ENCODE measurements at regions of chr3 and their contacts with region 1.

Region 1: DNA sequence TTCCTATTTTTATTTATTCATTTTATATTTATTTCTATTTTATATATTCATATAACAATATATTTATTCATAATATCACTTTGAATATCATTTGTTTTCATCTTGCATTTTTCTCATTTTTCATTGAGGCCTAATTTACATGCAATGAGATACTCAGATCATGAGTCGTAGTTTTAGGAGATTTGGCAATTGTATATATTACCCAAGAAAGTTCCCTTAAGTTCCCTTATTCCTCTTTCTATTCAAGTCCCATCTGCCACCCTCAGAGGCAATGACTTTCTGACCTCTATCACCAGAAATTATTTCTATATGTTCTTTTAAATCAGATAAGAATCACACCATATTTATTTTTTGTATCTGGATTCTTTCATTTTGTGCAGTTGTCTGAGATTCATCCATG is 329.1 kb upstream of the TPRG1 start:
- DNase-seq: peak; percentile 75 to 93 (median 84)
- H3K4me3 ChIP-seq: peak overlapping the region in 1 of 3 experiments; percentile 21
- H3K4me3 Mint-ChIP-seq: peak overlapping the region in 1 of 2 donors; percentile 46
- H3K27ac ChIP-seq: peak overlapping the region; percentile 52 to 80
- H3K27ac Mint-ChIP-seq: peak overlapping the region; percentile 85 to 98 (median 94)
- H3K4me1 ChIP-seq: peaks cover 42 to 59% of the 10 kb centered on the region in 2 donors
- H3K4me1 Mint-ChIP-seq: peaks cover 50% of the 10 kb centered on the region
- H3K27me3 ChIP-seq: no peaks in the 10 kb centered on the region
- H3K27me3 Mint-ChIP-seq: peaks cover 0 to 1% (median 0%) of the 10 kb centered on the region in 3 donors
- CTCF ChIP-seq: no peak

Region 2: DNA sequence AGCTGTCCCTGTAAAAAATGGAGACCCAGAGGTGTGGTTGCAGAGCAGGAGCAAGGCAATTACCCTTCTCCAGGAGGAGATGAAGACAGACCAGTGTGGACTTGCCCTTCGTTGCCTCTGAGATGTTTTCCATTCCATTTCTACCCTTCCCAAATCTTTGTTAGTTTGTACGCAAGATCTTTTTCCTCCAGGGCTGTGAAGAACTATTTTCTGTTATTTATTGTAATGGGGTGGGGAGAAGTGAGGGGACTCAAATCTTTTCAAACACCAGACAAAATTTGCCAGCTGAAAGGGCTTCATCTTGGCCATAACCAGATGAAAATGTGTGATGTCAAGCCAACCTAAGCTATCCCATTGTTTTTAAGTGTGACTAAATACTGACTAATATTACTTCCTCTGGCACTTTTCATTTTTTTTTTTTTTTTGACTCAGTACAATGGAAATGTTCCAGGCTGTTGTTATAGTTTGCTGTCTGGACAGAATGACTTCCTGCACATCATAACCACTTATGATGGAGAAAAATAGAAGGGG is 57.8 kb after region 1 on chr3:
- intact Hi-C with region 1: loop called in 1 of 2 experiments (anchors 10 kb)
- DNase-seq: peak; percentile 33 to 68 (median 62)
- H3K4me3 ChIP-seq: no peak overlapping the region
- H3K4me3 Mint-ChIP-seq: no peak overlapping the region
- H3K27ac ChIP-seq: peak overlapping the region in 1 of 2 donors; percentile 56
- H3K27ac Mint-ChIP-seq: peak overlapping the region in 6 of 7 donors; percentile 0 to 84 (median 41)
- H3K4me1 ChIP-seq: peaks cover 33 to 37% of the 10 kb centered on the region in 2 donors
- H3K4me1 Mint-ChIP-seq: peaks cover 43% of the 10 kb centered on the region
- H3K27me3 ChIP-seq: no peaks in the 10 kb centered on the region
- H3K27me3 Mint-ChIP-seq: peaks cover 0 to 4% (median 0%) of the 10 kb centered on the region in 3 donors
- CTCF ChIP-seq: no peak

Region 3: GRCh38 chr3:188914552-188914951 is 71.9 kb after region 1 on chr3:
- intact Hi-C with region 1: loop called (anchors 10 kb)
- DNase-seq: peak; percentile 81 to 88 (median 86)
- H3K4me3 ChIP-seq: no peak overlapping the region
- H3K4me3 Mint-ChIP-seq: peak overlapping the region in 1 of 2 donors; percentile 63
- H3K27ac ChIP-seq: peak overlapping the region in 1 of 2 donors; percentile 80
- H3K27ac Mint-ChIP-seq: peak overlapping the region; percentile 76 to 97 (median 89)
- H3K4me1 ChIP-seq: peaks cover 52% of the 10 kb centered on the region in 2 donors
- H3K4me1 Mint-ChIP-seq: peaks cover 55% of the 10 kb centered on the region
- H3K27me3 ChIP-seq: no peaks in the 10 kb centered on the region
- H3K27me3 Mint-ChIP-seq: peaks cover 0 to 2% (median 0%) of the 10 kb centered on the region in 3 donors
- CTCF ChIP-seq: no peak

Region 4: DNA sequence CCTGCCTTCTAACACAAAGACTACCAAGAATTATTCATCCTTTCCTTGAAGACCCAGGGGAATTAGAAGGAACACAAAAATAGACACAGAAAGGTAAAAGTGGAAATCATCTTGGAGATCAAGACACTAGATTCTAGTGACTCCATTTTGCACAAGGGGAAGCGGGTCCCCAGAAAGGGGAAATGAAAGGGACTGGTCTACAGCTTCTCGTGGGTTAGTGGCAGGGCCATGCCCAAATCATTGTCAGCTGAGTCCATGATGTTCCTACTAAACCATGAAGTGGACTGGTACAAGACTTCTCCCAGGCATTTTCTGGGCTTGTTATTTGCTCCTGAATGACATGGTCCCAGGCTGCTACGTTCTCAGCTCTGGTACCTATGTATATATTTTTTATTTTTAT is 98.5 kb after region 1 on chr3:
- intact Hi-C with region 1: loop called in 1 of 2 experiments (anchors 5 kb)
- DNase-seq: peak; percentile 85 to 93 (median 91)
- H3K4me3 ChIP-seq: peak overlapping the region in 1 of 3 experiments; percentile 62
- H3K4me3 Mint-ChIP-seq: peak overlapping the region in 1 of 2 donors; percentile 71
- H3K27ac ChIP-seq: peak overlapping the region; percentile 84 to 97
- H3K27ac Mint-ChIP-seq: peak overlapping the region; percentile 94 to 98 (median 97)
- H3K4me1 ChIP-seq: peaks cover 77 to 78% of the 10 kb centered on the region in 2 donors
- H3K4me1 Mint-ChIP-seq: peaks cover 73% of the 10 kb centered on the region
- H3K27me3 ChIP-seq: no peaks in the 10 kb centered on the region
- H3K27me3 Mint-ChIP-seq: peaks cover 0 to 3% (median 0%) of the 10 kb centered on the region in 3 donors
- CTCF ChIP-seq: no peak